CD8-positive, alpha-beta T cell (primary cell): ENCODE measurements at regions of chr5 and their contacts with region 1.

Region 1: GRCh38 chr5:39148983-39149534 is 70.3 kb downstream of the FYB1 start:
- DNase-seq: peak in 2 of 9 experiments; percentile 59 to 72
- ATAC-seq: peak; percentile 41
- H3K4me3 ChIP-seq: no peak overlapping the region
- H3K4me3 Mint-ChIP-seq: peak overlapping the region; percentile 13
- H3K27ac ChIP-seq: peak overlapping the region in 1 of 2 experiments; percentile 61
- H3K27ac Mint-ChIP-seq: peak overlapping the region; percentile 92
- H3K4me1 ChIP-seq: peaks cover 42% of the 10 kb centered on the region
- H3K4me1 Mint-ChIP-seq: peaks cover 76% of the 10 kb centered on the region
- H3K27me3 ChIP-seq: no peaks in the 10 kb centered on the region
- H3K27me3 Mint-ChIP-seq: no peaks in the 10 kb centered on the region
- CTCF ChIP-seq: peak; percentile 69

Region 2: DNA sequence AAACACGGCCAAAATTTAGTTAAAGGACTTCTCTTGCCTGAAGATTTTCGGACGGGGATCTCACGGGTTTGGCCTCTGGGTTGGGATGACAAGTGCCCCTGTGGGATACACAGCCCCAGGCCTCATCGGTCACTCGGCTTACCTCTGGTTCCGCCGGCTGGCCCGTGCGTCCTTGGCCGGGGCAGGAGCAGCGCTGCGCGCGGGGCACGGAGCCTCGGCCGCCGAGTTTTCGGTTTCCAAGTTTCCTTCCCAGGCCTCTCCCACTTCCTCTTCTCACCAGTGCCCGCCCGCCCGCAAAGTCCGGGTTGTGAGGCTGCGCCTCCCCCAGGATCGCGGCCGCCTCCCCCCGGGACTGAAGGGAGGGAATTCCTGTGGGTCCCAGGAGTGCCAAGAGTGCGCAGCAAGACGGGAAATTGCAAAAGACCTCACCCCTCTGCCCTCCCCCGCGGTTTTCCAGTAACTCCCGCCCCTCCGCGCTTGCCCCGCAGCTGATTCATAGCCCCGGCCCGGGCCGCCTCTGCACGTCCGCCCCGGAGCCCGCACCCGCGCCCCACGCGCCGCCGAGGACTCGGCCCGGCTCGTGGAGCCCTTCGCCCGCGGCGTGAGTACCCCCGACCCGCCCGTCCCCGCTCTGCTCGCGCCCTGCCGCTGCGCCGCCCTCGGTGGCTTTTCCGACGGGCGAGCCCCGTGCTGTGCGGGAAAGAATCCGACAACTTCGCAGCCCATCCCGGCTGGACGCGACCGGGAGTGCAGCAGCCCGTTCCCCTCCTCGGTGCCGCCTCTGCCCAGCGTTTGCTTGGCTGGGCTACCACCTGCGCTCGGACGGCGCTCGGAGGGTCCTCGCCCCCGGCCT is 303.3 kb before region 1 on chr5 and contains the start of gene OSMR:
- CTCF ChIA-PET with region 1: no interaction called
- POLR2A ChIA-PET with region 1: no interaction called
- intact Hi-C with region 1: no loop called
- DNase-seq: no peak
- ATAC-seq: no peak
- H3K4me3 ChIP-seq: no peak within 1 kb of the TSS
- H3K4me3 Mint-ChIP-seq: peak within 1 kb of the TSS; percentile 50
- H3K27ac ChIP-seq: no peak within 1 kb of the TSS
- H3K27ac Mint-ChIP-seq: no peak within 1 kb of the TSS
- H3K4me1 ChIP-seq: no peaks in the 10 kb centered on the region
- H3K4me1 Mint-ChIP-seq: peaks cover 5% of the 10 kb centered on the region
- H3K27me3 ChIP-seq: peaks cover 0 to 3% of the 10 kb centered on the region in 2 experiments
- H3K27me3 Mint-ChIP-seq: peaks cover 60% of the 10 kb centered on the region
- CTCF ChIP-seq: no peak
- total RNA-seq, gene OSMR: not detected

Region 3: GRCh38 chr5:39187831-39188731 is 39.0 kb after region 1 on chr5:
- CTCF ChIA-PET with region 1: interaction called, 7 read pairs
- POLR2A ChIA-PET with region 1: interaction called, 4 read pairs
- intact Hi-C with region 1: loop called in 1 of 2 experiments (anchors 2 kb)
- DNase-seq: peak in 4 of 9 experiments; percentile 47 to 66 (median 56)
- ATAC-seq: peak; percentile 53
- H3K4me3 ChIP-seq: peak overlapping the region; percentile 6 to 29
- H3K4me3 Mint-ChIP-seq: peak overlapping the region; percentile 75
- H3K27ac ChIP-seq: peak overlapping the region; percentile 51 to 88
- H3K27ac Mint-ChIP-seq: peak overlapping the region; percentile 98
- H3K4me1 ChIP-seq: peaks cover 90% of the 10 kb centered on the region
- H3K4me1 Mint-ChIP-seq: peaks cover 90% of the 10 kb centered on the region
- H3K27me3 ChIP-seq: no peaks in the 10 kb centered on the region
- H3K27me3 Mint-ChIP-seq: no peaks in the 10 kb centered on the region
- CTCF ChIP-seq: no peak

Region 4: DNA sequence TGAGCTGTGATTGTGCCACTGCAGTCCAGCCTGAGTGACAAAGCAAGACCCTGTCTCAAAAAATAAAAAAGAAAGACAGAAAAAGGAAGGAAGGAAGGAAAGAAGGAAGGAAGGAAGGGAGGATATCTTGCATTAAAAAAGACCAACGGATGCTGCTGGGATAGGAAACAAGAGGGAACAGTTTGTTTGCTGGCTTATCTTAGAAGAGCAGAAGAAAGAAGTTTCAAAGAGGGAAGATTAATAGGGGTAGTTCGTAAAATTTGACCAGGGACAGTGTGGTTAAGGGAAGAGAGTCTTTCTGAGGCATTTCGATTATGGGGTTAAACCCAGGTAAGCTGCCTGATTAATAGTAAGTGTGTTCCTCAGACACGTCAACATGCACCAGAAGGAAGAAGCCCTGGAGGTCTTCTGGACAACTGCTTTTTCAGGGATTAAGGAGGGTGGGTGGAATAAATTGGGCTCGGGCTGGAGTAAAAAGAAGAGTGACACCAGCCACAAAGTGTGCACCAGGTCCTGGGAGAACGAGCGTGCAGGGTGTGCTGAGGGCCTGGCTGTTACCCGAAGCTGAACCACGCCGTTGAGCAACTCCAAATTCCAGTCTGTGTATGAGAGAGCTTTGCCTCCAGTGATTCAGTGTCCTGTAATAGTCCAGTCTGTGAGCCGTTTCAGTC is 45.5 kb after region 1 on chr5:
- CTCF ChIA-PET with region 1: interaction called, 7 read pairs
- POLR2A ChIA-PET with region 1: interaction called, 4 read pairs
- intact Hi-C with region 1: loop called (anchors 1 to 2 kb)
- DNase-seq: peak in 1 of 9 experiments; percentile 41
- ATAC-seq: no peak
- H3K4me3 ChIP-seq: peak overlapping the region; percentile 12 to 28
- H3K4me3 Mint-ChIP-seq: peak overlapping the region; percentile 77
- H3K27ac ChIP-seq: peak overlapping the region; percentile 41 to 88
- H3K27ac Mint-ChIP-seq: peak overlapping the region; percentile 94
- H3K4me1 ChIP-seq: peaks cover 72% of the 10 kb centered on the region
- H3K4me1 Mint-ChIP-seq: peaks cover 76% of the 10 kb centered on the region
- H3K27me3 ChIP-seq: no peaks in the 10 kb centered on the region
- H3K27me3 Mint-ChIP-seq: no peaks in the 10 kb centered on the region
- CTCF ChIP-seq: no peak

Region 5: GRCh38 chr5:39202597-39203274 is 53.7 kb after region 1 on chr5:
- CTCF ChIA-PET with region 1: interaction called, 21 read pairs
- POLR2A ChIA-PET with region 1: interaction called, 4 read pairs
- intact Hi-C with region 1: loop called (anchors 1 to 2 kb)
- DNase-seq: peak in 4 of 9 experiments; percentile 49 to 77 (median 64)
- ATAC-seq: peak; percentile 58
- H3K4me3 ChIP-seq: peak overlapping the region; percentile 48 to 75
- H3K4me3 Mint-ChIP-seq: peak overlapping the region; percentile 93
- H3K27ac ChIP-seq: peak overlapping the region; percentile 70 to 88
- H3K27ac Mint-ChIP-seq: peak overlapping the region; percentile 96
- H3K4me1 ChIP-seq: peaks cover 48% of the 10 kb centered on the region
- H3K4me1 Mint-ChIP-seq: peaks cover 57% of the 10 kb centered on the region
- H3K27me3 ChIP-seq: no peaks in the 10 kb centered on the region
- H3K27me3 Mint-ChIP-seq: no peaks in the 10 kb centered on the region
- CTCF ChIP-seq: no peak

Region 6: DNA sequence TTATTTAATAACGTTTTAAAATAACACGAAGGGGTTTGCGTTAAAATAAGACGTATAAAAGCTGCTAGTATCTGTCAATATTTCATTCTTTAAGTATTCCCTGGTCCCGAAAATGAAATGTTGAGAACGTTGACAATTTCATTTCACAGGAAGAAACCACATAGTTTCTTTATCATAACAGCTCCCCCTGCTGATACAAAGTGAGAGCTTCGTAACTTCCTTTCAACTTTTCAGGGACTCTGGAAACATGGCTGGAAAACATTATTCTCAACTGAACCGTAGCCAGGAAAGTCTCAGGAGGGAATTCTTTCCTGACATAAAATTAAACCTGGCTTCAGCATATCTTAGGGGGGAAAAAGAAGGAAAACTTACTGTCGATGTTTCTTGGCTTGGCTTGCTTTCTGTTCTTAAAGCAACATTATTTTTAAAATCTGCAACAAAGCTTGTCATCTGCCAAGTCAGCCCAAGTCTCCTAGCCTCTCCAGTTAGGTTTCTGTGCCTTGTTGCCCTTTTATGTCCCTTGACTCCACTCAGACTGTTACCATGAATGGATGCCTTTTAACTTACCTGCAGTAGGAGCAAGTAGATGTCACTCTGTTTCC is 398.6 kb after region 1 on chr5:
- CTCF ChIA-PET with region 1: interaction called, 3 read pairs
- POLR2A ChIA-PET with region 1: no interaction called
- intact Hi-C with region 1: loop called (anchors 1 kb)
- DNase-seq: peak in 3 of 9 experiments; percentile 11 to 64 (median 45)
- ATAC-seq: peak; percentile 46
- H3K4me3 ChIP-seq: no peak overlapping the region
- H3K4me3 Mint-ChIP-seq: peak overlapping the region; percentile 43
- H3K27ac ChIP-seq: no peak overlapping the region
- H3K27ac Mint-ChIP-seq: no peak overlapping the region
- H3K4me1 ChIP-seq: no peaks in the 10 kb centered on the region
- H3K4me1 Mint-ChIP-seq: peaks cover 6% of the 10 kb centered on the region
- H3K27me3 ChIP-seq: no peaks in the 10 kb centered on the region
- H3K27me3 Mint-ChIP-seq: no peaks in the 10 kb centered on the region
- CTCF ChIP-seq: peak; percentile 72

Region 7: GRCh38 chr5:39570403-39571027 is 421.5 kb after region 1 on chr5:
- CTCF ChIA-PET with region 1: no interaction called
- POLR2A ChIA-PET with region 1: no interaction called
- intact Hi-C with region 1: loop called in 1 of 2 experiments (anchors 5 kb)
- DNase-seq: peak in 2 of 9 experiments; percentile 30 to 45
- ATAC-seq: peak; percentile 49
- H3K4me3 ChIP-seq: no peak overlapping the region
- H3K4me3 Mint-ChIP-seq: no peak overlapping the region
- H3K27ac ChIP-seq: no peak overlapping the region
- H3K27ac Mint-ChIP-seq: no peak overlapping the region
- H3K4me1 ChIP-seq: no peaks in the 10 kb centered on the region
- H3K4me1 Mint-ChIP-seq: no peaks in the 10 kb centered on the region
- H3K27me3 ChIP-seq: no peaks in the 10 kb centered on the region
- H3K27me3 Mint-ChIP-seq: peaks cover 10% of the 10 kb centered on the region
- CTCF ChIP-seq: peak; percentile 61